ENCODE measurements at regions of chr19 and their contacts with region 1.

Region 1: GRCh38 chr19:8654591-8655339 is 24.3 kb downstream of the NFILZ start:
- DNase-seq: peak; percentile 39
- H3K4me3 Mint-ChIP-seq: peak overlapping the region; percentile 56
- H3K27ac Mint-ChIP-seq: no peak overlapping the region
- H3K4me1 Mint-ChIP-seq: peaks cover 5% of the 10 kb centered on the region
- H3K27me3 Mint-ChIP-seq: peaks cover 8% of the 10 kb centered on the region

Region 2: GRCh38 chr19:8580710-8581281 is 74.0 kb before region 1 on chr19:
- intact Hi-C with region 1: no loop called
- DNase-seq: peak; percentile 80
- H3K4me3 Mint-ChIP-seq: no peak overlapping the region
- H3K27ac Mint-ChIP-seq: no peak overlapping the region
- H3K4me1 Mint-ChIP-seq: peaks cover 26% of the 10 kb centered on the region
- H3K27me3 Mint-ChIP-seq: peaks cover 3% of the 10 kb centered on the region

Region 3: DNA sequence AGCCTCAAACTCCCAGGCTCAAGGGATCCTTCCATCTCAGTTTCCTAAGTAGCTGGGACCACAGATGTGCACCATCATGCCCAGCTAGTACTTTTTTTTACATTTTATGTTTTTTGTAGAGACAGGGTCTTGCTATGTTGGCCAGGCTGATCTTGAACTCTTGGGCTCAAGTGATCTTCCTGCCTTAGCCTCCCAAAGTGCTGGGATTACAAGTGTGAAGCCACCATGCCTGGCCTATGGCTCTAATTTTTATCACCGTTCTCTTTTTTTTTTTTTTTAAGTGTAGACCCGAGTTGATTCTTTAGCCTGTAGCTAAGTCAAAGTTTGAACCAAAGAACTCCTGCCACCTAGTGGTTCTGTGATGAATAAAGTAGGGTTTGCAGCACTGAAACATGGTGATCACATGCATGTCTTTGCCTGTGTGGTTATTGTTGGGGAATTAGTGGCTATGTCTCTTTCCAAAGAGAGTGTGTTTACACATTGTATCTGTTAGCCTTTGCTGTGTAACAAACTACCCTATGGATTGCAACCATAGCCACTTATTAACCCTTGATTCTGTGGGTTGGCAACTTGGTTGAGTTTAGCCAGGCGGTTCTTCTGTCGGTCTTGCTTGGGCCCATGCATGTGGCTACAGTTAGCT is 12.7 kb before region 1 on chr19:
- intact Hi-C with region 1: no loop called
- DNase-seq: no peak
- H3K4me3 Mint-ChIP-seq: no peak overlapping the region
- H3K27ac Mint-ChIP-seq: no peak overlapping the region
- H3K4me1 Mint-ChIP-seq: no peaks in the 10 kb centered on the region
- H3K27me3 Mint-ChIP-seq: peaks cover 14% of the 10 kb centered on the region

Region 4: GRCh38 chr19:8811315-8812172 is 156.8 kb after region 1 on chr19:
- intact Hi-C with region 1: no loop called
- DNase-seq: no peak
- H3K4me3 Mint-ChIP-seq: no peak overlapping the region
- H3K27ac Mint-ChIP-seq: no peak overlapping the region
- H3K4me1 Mint-ChIP-seq: no peaks in the 10 kb centered on the region
- H3K27me3 Mint-ChIP-seq: no peaks in the 10 kb centered on the region

Region 5: DNA sequence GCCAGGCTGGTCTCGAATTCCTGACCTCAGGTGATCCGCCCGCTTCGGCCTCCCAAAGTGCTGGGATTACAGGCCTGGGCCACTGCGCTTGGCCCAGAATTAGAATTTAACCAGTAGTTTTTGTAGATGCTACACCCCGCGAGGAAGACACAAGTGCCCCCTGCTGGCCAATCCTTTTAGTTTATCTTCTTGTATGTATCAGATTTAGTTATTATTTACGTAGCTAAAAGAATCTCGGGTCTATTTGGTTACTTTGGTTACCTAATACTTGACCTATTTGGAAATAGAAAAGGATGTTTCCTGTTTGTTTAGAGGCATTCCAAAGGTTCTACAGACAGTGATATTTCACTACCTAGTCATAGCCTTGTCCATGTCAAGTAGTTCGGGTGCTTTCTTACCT is 333.4 kb after region 1 on chr19:
- intact Hi-C with region 1: loop called (anchors 5 kb)
- DNase-seq: no peak
- H3K4me3 Mint-ChIP-seq: no peak overlapping the region
- H3K27ac Mint-ChIP-seq: no peak overlapping the region
- H3K4me1 Mint-ChIP-seq: no peaks in the 10 kb centered on the region
- H3K27me3 Mint-ChIP-seq: no peaks in the 10 kb centered on the region